GM13977 (cell line): ENCODE measurements at regions of chr6 and their contacts with region 1.

Region 1: DNA sequence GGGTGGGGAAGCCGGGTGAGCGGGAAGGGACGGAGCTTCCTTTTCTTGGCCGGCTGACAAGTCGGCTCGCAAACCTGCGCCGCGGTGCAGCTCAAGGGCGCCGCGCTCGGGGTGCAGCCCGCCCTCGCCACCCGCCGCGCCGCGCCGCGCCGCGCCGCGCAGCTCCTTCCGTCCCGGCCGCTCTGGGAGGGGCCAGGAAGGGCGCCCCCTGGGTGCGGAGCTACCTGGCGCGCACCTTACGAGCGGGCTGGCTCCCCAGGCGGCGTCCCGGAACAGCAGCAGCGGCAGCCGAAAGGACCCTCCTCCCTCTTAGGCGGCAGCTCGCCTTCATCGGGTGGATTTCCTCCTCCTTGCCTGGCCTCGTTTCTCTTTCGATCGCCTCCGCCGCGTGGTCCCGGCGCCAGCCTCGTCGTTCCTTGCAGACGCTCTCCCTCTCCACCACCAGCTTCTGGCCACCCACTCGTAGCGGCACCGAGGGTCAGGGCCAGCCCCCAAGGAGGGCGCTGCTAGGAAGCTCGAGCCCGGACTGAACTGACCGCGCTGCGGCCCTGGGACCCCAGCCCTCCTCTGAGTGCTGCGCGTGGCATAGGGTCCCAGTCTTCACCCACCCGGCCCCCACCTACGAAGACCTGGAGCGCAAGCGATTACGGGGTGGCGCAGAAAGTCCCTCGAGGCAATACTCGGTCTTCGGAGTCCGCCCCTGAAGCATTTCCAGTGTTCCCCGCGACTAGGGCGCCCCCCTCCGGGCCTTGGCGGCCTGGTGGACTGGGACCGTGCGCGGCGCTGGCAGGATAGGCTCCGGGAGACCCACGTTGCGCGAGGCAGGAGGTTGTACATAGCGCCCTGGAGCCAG is at the start of gene MAP3K5:
- DNase-seq: peak; percentile 76
- CTCF ChIP-seq: peak; percentile 93

Region 2: GRCh38 chr6:135686784-135687301 is 1105.8 kb before region 1 on chr6:
- in situ Hi-C with region 1: no loop called
- DNase-seq: no peak
- CTCF ChIP-seq: no peak

Region 3: DNA sequence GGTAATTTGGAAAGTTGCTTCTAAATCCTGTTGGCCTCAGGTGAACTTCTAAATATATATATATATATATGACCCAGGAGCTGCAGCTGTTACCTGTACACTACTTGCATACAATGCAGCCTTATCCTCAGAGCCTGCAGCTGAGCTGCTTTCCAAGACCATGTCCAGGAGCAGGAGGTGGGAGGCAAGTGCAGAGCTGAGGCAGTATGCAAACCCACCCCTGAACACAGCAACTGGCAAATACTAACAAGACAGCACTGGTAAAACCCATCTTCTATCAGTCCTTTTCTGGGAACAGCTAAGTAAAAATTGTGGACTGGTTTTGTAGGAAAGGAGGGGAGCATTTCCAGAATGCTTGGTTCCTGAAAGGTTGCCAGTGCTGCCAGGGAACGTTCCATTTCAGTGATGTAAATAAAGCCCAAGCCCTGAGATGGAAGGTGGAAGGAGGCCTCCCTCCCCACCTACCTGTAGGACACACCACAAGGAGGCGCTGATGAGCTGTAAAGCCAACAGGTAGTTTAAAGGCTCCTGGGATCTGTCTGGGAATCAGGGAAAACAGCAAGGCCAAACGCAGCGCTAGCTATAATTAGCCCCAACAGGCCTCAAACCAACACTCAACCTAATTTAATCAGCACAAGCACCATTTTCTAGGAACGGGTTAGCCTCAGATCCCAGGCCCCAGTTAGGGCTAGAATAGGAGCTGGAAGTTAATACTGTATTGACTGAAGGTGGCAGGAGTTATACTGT is 148.6 kb before region 1 on chr6:
- in situ Hi-C with region 1: loop called (anchors 10 kb)
- DNase-seq: peak; percentile 41
- CTCF ChIP-seq: peak; percentile 86